Ascending aorta (tissue), 2 donors: ENCODE measurements at regions of chr19 and their contacts with region 1.

Region 1: DNA sequence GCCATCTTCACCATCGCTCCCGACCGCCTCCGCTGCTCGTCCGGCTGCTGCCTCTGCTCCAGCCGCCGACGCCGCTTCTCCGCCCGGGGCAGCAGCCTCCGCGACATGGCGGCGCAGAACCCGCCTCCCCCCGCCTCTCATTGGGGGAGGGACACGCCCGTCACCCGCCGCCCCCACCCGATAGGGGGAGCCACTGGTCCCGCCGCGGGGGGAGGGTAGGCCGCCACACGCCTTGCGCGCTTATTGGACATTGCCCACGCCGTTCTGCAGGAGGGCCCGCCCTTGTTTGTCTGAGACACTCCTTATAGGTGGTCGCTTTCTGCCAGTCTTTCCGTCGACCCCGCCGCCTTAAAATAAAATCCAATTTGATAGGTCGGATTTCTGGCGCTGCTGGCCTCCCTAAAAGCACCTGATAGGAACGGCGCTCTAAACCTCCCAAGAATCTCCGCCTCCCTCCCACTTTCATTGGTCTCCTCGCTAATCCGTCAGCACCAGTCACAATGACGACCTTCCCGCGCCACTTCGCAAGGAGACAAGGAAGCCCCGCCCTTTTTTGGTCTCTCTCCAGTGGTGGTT is at the start of gene HNRNPL:
- DNase-seq: peak in 1 of 2 donors; percentile 100
- H3K4me3 ChIP-seq: peak within 1 kb of the TSS; percentile 81 to 98
- H3K27ac ChIP-seq: peak within 1 kb of the TSS; percentile 98 to 100
- H3K4me1 ChIP-seq: peaks cover 16 to 41% of the 10 kb centered on the region in 2 donors
- H3K27me3 ChIP-seq: no peaks in the 10 kb centered on the region
- CTCF ChIP-seq: peak; percentile 2 to 34 (median 31)
- total RNA-seq, gene HNRNPL: 110 TPM

Region 2: GRCh38 chr19:38402967-38403861 is 446.7 kb before region 1 on chr19 and contains the start of gene FAM98C:
- intact Hi-C with region 1: loop called (anchors 2 kb)
- DNase-seq: peak; percentile 92 to 99
- H3K4me3 ChIP-seq: peak within 1 kb of the TSS; percentile 93
- H3K27ac ChIP-seq: peak within 1 kb of the TSS; percentile 72 to 73
- H3K4me1 ChIP-seq: peaks cover 0 to 11% of the 10 kb centered on the region in 2 donors
- H3K27me3 ChIP-seq: no peaks in the 10 kb centered on the region
- CTCF ChIP-seq: peak; percentile 95 to 97 (median 96)
- total RNA-seq, gene FAM98C: 11.1 TPM

Region 3: GRCh38 chr19:38647368-38647965 is 202.5 kb before region 1 on chr19 and contains the start of gene ACTN4:
- intact Hi-C with region 1: loop called (anchors 1 kb)
- DNase-seq: peak; percentile 93 to 99
- H3K4me3 ChIP-seq: peak within 1 kb of the TSS; percentile 89 to 100
- H3K27ac ChIP-seq: peak within 1 kb of the TSS; percentile 92 to 96
- H3K4me1 ChIP-seq: peaks cover 10 to 22% of the 10 kb centered on the region in 2 donors
- H3K27me3 ChIP-seq: no peaks in the 10 kb centered on the region
- CTCF ChIP-seq: no peak
- total RNA-seq, gene ACTN4: 1,036 TPM

Region 4: GRCh38 chr19:38869856-38870607 is 20.1 kb after region 1 on chr19:
- intact Hi-C with region 1: loop called (anchors 1 kb)
- DNase-seq: peak in 1 of 2 donors; percentile 93
- H3K4me3 ChIP-seq: peak overlapping the region; percentile 40 to 77
- H3K27ac ChIP-seq: no peak overlapping the region
- H3K4me1 ChIP-seq: peaks cover 5 to 9% of the 10 kb centered on the region in 2 donors
- H3K27me3 ChIP-seq: no peaks in the 10 kb centered on the region
- CTCF ChIP-seq: peak; percentile 81 to 89 (median 86)

Region 5: GRCh38 chr19:38880076-38880881 is 30.3 kb after region 1 on chr19:
- intact Hi-C with region 1: no loop called
- DNase-seq: no peak
- H3K4me3 ChIP-seq: no peak overlapping the region
- H3K27ac ChIP-seq: no peak overlapping the region
- H3K4me1 ChIP-seq: no peaks in the 10 kb centered on the region
- H3K27me3 ChIP-seq: no peaks in the 10 kb centered on the region
- CTCF ChIP-seq: no peak

Region 6: GRCh38 chr19:39341719-39342604 is 492.0 kb after region 1 on chr19 and contains the start of gene SAMD4B:
- intact Hi-C with region 1: loop called (anchors 5 kb)
- DNase-seq: peak; percentile 91 to 99
- H3K4me3 ChIP-seq: peak within 1 kb of the TSS; percentile 97
- H3K27ac ChIP-seq: peak within 1 kb of the TSS; percentile 90 to 91
- H3K4me1 ChIP-seq: peaks cover 11 to 36% of the 10 kb centered on the region in 2 donors
- H3K27me3 ChIP-seq: no peaks in the 10 kb centered on the region
- CTCF ChIP-seq: peak; percentile 77 to 91 (median 82)
- total RNA-seq, gene SAMD4B: 358 TPM